ENCODE measurements at regions of chr9 and their contacts with region 1.

Region 1: GRCh38 chr9:108565651-108566378 is 290.0 kb downstream of the ACTL7B start:
- DNase-seq: peak; percentile 92
- H3K4me3 Mint-ChIP-seq: no peak overlapping the region
- H3K27ac Mint-ChIP-seq: peak overlapping the region; percentile 29
- H3K4me1 Mint-ChIP-seq: peaks cover 56% of the 10 kb centered on the region
- H3K27me3 Mint-ChIP-seq: no peaks in the 10 kb centered on the region
- CTCF ChIP-seq: peak; percentile 75

Region 2: DNA sequence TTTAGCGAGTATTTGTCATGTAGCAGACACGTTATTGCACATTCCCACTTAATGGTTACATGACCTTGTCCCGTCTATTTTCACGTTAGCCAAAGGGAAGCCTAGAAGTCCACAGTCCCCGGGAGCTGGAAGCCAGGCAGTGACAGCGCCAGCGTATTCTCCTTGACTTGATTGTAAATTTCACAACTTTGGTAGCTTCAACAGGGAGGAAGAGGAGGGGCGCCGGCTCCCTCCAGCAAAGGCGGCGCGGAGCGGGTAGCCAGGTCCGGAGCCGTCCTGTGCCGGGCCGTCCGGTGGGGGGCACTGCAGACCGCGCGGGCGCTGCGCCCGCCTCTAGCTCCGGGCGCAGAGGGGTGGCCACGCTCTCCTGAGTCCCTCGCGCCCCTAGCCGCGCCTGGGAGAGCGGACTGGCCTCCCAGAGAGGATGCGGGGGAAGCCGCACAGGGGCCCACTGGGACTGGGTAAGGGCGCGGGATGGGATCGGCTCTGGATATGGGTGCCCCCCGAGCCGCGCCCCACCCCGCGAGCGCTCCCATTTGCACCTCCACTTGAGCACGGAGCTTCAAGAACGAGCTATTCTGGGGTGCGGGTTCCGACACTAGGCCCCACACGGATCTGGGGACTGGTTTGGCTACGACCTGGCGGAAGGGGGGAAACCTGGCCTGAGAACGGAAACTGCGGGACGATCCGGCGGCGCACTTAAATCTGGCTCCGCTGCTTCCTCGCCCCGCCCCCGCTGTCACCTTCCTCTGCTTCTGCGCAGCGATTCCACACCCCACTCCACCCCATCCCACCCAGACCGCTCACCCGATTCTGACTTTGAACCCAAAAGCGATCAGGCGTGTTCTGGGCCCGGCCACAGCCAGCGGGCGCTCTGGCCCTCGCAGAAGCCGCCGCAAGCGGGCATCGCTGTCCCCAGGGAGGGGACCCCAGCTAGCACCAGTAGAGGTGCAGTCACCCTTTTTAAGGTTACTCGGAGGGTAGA is 1100.1 kb before region 1 on chr9:
- CTCF ChIA-PET with region 1: interaction called, 11 read pairs
- POLR2A ChIA-PET with region 1: no interaction called
- intact Hi-C with region 1: loop called (anchors 1 kb)
- DNase-seq: peak; percentile 61
- H3K4me3 Mint-ChIP-seq: peak overlapping the region; percentile 69
- H3K27ac Mint-ChIP-seq: no peak overlapping the region
- H3K4me1 Mint-ChIP-seq: no peaks in the 10 kb centered on the region
- H3K27me3 Mint-ChIP-seq: no peaks in the 10 kb centered on the region
- CTCF ChIP-seq: peak; percentile 95

Region 3: GRCh38 chr9:107732781-107733522 is 832.9 kb before region 1 on chr9:
- CTCF ChIA-PET with region 1: interaction called, 3 read pairs
- POLR2A ChIA-PET with region 1: interaction called, 13 read pairs
- intact Hi-C with region 1: loop called (anchors 5 kb)
- DNase-seq: peak; percentile 90
- H3K4me3 Mint-ChIP-seq: peak overlapping the region; percentile 65
- H3K27ac Mint-ChIP-seq: peak overlapping the region; percentile 88
- H3K4me1 Mint-ChIP-seq: peaks cover 58% of the 10 kb centered on the region
- H3K27me3 Mint-ChIP-seq: no peaks in the 10 kb centered on the region
- CTCF ChIP-seq: no peak

Region 4: DNA sequence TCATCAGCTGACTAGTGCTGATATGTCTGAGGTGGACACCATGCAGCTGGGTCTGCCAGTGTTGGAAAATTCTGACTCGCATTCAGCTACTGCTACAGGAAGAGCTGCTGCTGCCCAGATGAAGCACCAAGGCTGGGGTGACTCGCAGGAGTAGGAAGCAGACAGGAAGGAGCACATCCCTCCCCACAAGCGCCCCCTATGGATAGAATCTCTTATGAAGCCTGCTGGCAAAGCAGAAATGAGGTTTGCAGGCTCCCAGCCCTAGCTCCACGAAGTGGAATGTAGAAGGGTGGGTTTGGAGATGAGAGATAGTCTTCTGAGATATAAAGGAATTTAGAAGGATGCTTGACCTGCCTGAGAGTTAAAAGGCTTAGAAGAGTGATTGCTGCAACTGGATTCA is 153.1 kb before region 1 on chr9:
- CTCF ChIA-PET with region 1: interaction called, 123 read pairs
- POLR2A ChIA-PET with region 1: interaction called, 13 read pairs
- intact Hi-C with region 1: loop called (anchors 1 kb)
- DNase-seq: peak; percentile 19
- H3K4me3 Mint-ChIP-seq: no peak overlapping the region
- H3K27ac Mint-ChIP-seq: no peak overlapping the region
- H3K4me1 Mint-ChIP-seq: peaks cover 11% of the 10 kb centered on the region
- H3K27me3 Mint-ChIP-seq: no peaks in the 10 kb centered on the region
- CTCF ChIP-seq: no peak

Region 5: DNA sequence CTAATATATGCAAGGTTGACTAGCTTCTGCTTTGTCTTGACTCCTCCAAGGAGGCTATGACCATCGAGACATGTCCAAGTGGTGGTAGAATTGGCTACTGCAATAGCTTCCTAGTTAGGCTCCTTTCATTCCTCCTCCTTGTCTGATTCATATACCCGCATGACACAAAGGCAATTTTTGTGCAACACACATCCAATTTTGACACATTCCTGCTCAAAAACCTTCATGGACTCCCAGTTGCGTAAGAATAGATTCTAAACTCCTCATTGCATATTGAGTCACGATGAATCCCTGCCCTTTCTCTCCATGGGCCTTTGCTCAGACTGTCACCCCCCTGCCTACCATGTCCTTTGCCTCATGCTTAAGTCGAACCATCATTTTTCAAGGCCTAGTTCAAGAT is 54.5 kb before region 1 on chr9:
- CTCF ChIA-PET with region 1: no interaction called
- POLR2A ChIA-PET with region 1: no interaction called
- intact Hi-C with region 1: no loop called
- DNase-seq: peak; percentile 86
- H3K4me3 Mint-ChIP-seq: no peak overlapping the region
- H3K27ac Mint-ChIP-seq: no peak overlapping the region
- H3K4me1 Mint-ChIP-seq: peaks cover 8% of the 10 kb centered on the region
- H3K27me3 Mint-ChIP-seq: no peaks in the 10 kb centered on the region
- CTCF ChIP-seq: no peak

Region 6: GRCh38 chr9:108551030-108551838 is 14.6 kb before region 1 on chr9:
- CTCF ChIA-PET with region 1: interaction called, 29 read pairs
- POLR2A ChIA-PET with region 1: interaction called, 95 read pairs
- intact Hi-C with region 1: no loop called
- DNase-seq: peak; percentile 97
- H3K4me3 Mint-ChIP-seq: peak overlapping the region; percentile 53
- H3K27ac Mint-ChIP-seq: peak overlapping the region; percentile 91
- H3K4me1 Mint-ChIP-seq: peaks cover 37% of the 10 kb centered on the region
- H3K27me3 Mint-ChIP-seq: no peaks in the 10 kb centered on the region
- CTCF ChIP-seq: no peak

Region 7: DNA sequence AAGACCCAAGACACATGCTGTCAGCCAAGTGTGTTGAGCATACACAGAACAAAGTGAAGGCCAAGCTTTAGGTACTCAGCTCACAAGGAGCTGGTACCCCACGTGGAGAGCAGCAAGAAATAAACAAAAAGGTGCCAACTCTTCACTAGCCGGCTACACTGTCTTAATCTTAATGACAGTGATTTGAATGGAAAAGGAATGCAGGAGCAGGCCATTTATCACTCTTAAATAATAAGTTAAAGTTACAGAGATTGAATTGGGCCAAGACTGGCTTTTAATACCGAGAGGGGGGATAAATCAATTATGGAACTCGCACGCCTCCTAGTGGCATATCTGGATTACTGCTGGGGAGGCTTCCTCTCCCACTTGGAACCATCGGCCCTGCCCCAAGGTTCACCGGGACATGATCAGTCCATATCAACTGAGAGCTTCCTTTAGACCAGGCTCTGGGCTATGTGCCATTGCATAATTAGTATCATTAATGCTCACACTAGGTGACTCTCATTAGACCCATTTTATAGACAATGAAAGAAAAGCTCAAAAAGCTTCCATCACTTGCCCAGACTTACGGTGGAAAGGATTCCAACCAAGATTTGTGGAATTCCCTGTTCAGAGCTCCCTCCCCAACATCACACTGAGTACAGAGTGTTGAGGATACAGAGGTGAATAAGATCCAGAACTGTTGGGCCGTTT is 196.0 kb after region 1 on chr9:
- CTCF ChIA-PET with region 1: interaction called, 24 read pairs
- POLR2A ChIA-PET with region 1: interaction called, 10 read pairs
- intact Hi-C with region 1: loop called (anchors 1 kb)
- DNase-seq: peak; percentile 71
- H3K4me3 Mint-ChIP-seq: no peak overlapping the region
- H3K27ac Mint-ChIP-seq: peak overlapping the region; percentile 31
- H3K4me1 Mint-ChIP-seq: peaks cover 18% of the 10 kb centered on the region
- H3K27me3 Mint-ChIP-seq: no peaks in the 10 kb centered on the region
- CTCF ChIP-seq: peak; percentile 89

Region 8: GRCh38 chr9:109119439-109120203 is 553.8 kb after region 1 on chr9 and contains the start of gene TMEM245:
- CTCF ChIA-PET with region 1: no interaction called
- POLR2A ChIA-PET with region 1: no interaction called
- intact Hi-C with region 1: no loop called
- DNase-seq: peak; percentile 99
- H3K4me3 Mint-ChIP-seq: peak within 1 kb of the TSS; percentile 86
- H3K27ac Mint-ChIP-seq: peak within 1 kb of the TSS; percentile 73
- H3K4me1 Mint-ChIP-seq: peaks cover 22% of the 10 kb centered on the region
- H3K27me3 Mint-ChIP-seq: no peaks in the 10 kb centered on the region
- CTCF ChIP-seq: no peak
- total RNA-seq, gene TMEM245: 35.0 and 43.8 TPM in 2 replicates

Measured in MCF 10A (cell line).